ENCODE measurements at regions of chr5 and their contacts with region 1.

Region 1: DNA sequence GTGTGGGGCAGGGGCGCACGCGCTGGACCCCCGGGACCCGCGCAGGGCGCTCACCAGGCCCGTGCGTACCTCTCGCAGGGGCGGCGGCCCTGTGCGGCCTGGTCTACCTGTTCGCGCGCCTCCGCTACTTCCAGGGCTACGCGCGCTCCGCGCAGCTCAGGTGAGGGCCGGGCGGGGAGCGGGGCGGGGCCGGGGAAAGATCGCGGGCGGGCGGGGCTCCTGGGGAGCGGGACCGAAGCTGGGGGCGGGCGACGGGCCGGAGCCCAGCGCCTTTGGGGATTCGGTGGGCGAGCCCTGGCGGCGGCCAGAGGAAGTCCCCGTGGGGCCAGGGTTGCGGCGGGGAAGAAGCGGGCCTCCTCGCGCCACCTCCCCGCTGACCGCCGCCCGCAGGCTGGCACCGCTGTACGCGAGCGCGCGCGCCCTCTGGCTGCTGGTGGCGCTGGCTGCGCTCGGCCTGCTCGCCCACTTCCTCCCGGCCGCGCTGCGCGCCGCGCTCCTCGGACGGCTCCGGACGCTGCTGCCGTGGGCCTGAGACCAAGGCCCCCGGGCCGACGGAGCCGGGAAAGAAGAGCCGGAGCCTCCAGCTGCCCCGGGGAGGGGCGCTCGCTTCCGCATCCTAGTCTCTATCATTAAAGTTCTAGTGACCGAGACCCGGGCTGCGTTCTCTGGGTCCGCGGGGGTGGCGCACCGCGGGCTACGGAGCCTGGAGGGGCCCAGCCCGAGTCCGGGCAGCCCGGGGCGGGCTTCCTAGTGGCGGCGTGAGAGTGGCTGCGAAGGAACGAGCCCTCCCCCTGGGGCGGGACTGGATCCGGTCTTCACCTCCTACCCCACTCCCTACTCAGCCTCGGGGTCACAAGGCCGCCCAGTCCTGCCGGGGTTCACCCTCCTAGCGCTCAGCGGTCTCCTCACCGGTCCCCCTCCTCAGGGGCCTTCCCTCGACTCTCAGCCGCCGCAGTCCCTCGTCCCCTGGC is 2.4 kb downstream of the LTC4S start:
- DNase-seq: peak; percentile 88 to 94
- ATAC-seq: peak; percentile 85
- H3K4me3 ChIP-seq: peak overlapping the region; percentile 36 to 59
- H3K27ac ChIP-seq: peak overlapping the region in 1 of 2 donors; percentile 15
- H3K4me1 ChIP-seq: no peaks in the 10 kb centered on the region
- H3K27me3 ChIP-seq: no peaks in the 10 kb centered on the region

Region 2: GRCh38 chr5:179678223-179679013 is 117.7 kb before region 1 on chr5:
- intact Hi-C with region 1: loop called in 1 of 2 experiments (anchors 10 kb)
- DNase-seq: peak; percentile 98 to 99
- ATAC-seq: peak; percentile 98
- H3K4me3 ChIP-seq: peak overlapping the region; percentile 38 to 77
- H3K27ac ChIP-seq: peak overlapping the region in 1 of 2 donors; percentile 17
- H3K4me1 ChIP-seq: no peaks in the 10 kb centered on the region
- H3K27me3 ChIP-seq: no peaks in the 10 kb centered on the region

Region 3: DNA sequence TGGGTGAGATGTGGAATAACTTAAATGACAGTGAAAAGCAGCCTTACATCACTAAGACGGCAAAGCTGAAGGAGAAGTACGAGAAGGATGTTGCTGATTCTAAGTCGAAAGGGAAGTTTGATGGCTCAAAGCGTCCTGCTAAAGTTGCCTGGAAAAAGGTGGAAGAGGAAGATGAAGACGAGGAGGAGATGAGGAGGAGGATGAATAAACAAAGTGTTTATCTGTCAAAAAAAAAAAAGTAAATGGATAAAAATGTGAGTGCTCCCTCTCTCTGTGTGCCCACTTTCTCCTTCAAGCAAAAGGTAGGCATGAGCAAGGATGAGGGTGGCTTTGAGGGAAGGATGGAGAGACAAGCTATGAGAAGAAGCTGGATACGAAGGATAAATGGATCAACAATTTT is 101.6 kb before region 1 on chr5:
- intact Hi-C with region 1: no loop called
- DNase-seq: no peak
- ATAC-seq: no peak
- H3K4me3 ChIP-seq: no peak overlapping the region
- H3K27ac ChIP-seq: no peak overlapping the region
- H3K4me1 ChIP-seq: no peaks in the 10 kb centered on the region
- H3K27me3 ChIP-seq: no peaks in the 10 kb centered on the region

Region 4: DNA sequence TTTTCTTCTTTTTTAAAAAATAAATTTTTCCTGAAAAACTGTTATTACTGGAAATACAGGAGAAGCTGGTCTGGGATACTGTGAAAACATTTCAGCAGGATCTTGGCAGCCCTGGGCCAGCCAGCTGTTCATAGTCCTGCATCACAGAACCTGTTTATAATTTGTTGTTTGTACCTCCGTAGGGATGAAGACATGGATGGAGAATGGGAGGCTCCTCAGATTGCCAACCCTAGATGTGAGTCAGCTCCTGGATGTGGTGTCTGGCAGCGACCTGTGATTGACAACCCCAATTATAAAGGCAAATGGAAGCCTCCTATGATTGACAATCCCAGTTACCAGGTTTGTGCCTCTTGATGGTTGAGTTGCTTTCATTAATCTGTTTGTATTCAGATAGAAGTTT is 75.9 kb before region 1 on chr5:
- intact Hi-C with region 1: loop called in 1 of 2 experiments (anchors 10 kb)
- DNase-seq: no peak
- ATAC-seq: no peak
- H3K4me3 ChIP-seq: no peak overlapping the region
- H3K27ac ChIP-seq: no peak overlapping the region
- H3K4me1 ChIP-seq: no peaks in the 10 kb centered on the region
- H3K27me3 ChIP-seq: no peaks in the 10 kb centered on the region

Region 5: GRCh38 chr5:179763215-179763945 is 32.8 kb before region 1 on chr5:
- intact Hi-C with region 1: loop called (anchors 1 to 5 kb)
- DNase-seq: peak; percentile 73 to 78
- ATAC-seq: peak; percentile 86
- H3K4me3 ChIP-seq: no peak overlapping the region
- H3K27ac ChIP-seq: peak overlapping the region; percentile 46 to 95
- H3K4me1 ChIP-seq: peaks cover 0 to 3% of the 10 kb centered on the region in 2 donors
- H3K27me3 ChIP-seq: no peaks in the 10 kb centered on the region